Mammary epithelial cell (primary cell): ENCODE measurements at regions of chr17 and their contacts with region 1.

Region 1: GRCh38 chr17:33366981-33367383 is 73.9 kb upstream of the ASIC2 start:
- DNase-seq: no peak
- H3K4me3 ChIP-seq: no peak overlapping the region
- H3K27ac ChIP-seq: no peak overlapping the region
- H3K4me1 ChIP-seq: no peaks in the 10 kb centered on the region
- H3K27me3 ChIP-seq: no peaks in the 10 kb centered on the region
- CTCF ChIP-seq: no peak

Region 2: GRCh38 chr17:33140413-33141099 is 226.4 kb before region 1 on chr17:
- CTCF ChIA-PET with region 1: no interaction called
- dilution Hi-C with region 1: no loop called
- in situ Hi-C with region 1: no loop called
- intact Hi-C with region 1: no loop called
- DNase-seq: no peak
- H3K4me3 ChIP-seq: no peak overlapping the region
- H3K27ac ChIP-seq: no peak overlapping the region
- H3K4me1 ChIP-seq: peaks cover under 1% of the 10 kb centered on the region
- H3K27me3 ChIP-seq: no peaks in the 10 kb centered on the region
- CTCF ChIP-seq: no peak

Region 3: GRCh38 chr17:33302394-33302793 is 64.6 kb before region 1 on chr17:
- CTCF ChIA-PET with region 1: no interaction called
- dilution Hi-C with region 1: no loop called
- in situ Hi-C with region 1: loop called in 1 of 2 experiments (anchors 10 kb)
- intact Hi-C with region 1: no loop called
- DNase-seq: peak; percentile 12
- H3K4me3 ChIP-seq: no peak overlapping the region
- H3K27ac ChIP-seq: no peak overlapping the region
- H3K4me1 ChIP-seq: no peaks in the 10 kb centered on the region
- H3K27me3 ChIP-seq: no peaks in the 10 kb centered on the region
- CTCF ChIP-seq: no peak

Region 4: DNA sequence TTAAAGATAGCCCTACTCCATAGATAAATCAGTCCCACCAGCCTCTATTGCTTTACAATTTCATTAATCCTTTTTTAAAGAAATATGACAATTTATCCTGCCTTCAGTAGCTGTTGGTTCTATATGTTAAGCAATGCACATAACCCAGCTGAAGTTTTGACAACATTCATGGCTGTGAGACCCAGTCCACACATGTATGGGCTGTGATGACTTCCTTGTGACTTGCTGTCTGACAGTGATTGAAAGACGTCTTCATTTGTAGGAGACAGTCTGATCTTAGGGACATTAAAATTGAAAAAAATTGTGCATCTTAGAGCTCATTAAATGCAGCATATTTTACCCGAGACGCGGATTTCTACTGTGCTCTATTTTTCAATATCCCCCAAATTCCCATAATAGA is 178.1 kb after region 1 on chr17:
- CTCF ChIA-PET with region 1: no interaction called
- dilution Hi-C with region 1: no loop called
- in situ Hi-C with region 1: no loop called
- intact Hi-C with region 1: no loop called
- DNase-seq: no peak
- H3K4me3 ChIP-seq: no peak overlapping the region
- H3K27ac ChIP-seq: no peak overlapping the region
- H3K4me1 ChIP-seq: no peaks in the 10 kb centered on the region
- H3K27me3 ChIP-seq: no peaks in the 10 kb centered on the region
- CTCF ChIP-seq: no peak